Activated naive CD4-positive, alpha-beta T cell treated with anti-CD3 and anti-CD28 coated beads for 36 hours (primary cell): ENCODE measurements at regions of chr7 and their contacts with region 1.

Region 1: DNA sequence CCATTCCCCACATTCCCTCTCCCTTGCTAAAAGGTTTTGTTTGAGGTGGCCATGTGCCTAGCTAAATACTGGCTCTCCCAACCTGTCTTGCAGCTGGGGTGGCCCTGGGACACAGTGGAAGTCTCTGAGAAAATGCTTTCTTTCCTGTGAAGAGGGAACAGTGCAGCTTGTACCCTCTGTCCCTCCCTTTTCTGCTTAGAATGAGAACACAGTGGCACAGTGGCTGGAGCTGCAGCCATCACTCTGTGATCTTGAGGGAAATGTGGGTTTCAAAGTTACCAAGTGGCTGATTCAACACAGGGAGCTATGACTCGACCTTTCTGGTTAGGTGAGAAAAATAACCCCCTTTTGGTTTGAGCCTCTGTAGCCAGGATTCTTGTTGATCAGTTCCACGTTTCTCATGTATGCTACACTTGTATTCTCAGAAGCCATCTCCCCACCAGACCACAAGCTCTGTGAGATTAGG is 62.7 kb upstream of the CARD11 start:
- DNase-seq: peak; percentile 78
- H3K4me3 Mint-ChIP-seq: no peak overlapping the region
- H3K27ac Mint-ChIP-seq: peak overlapping the region; percentile 86
- H3K4me1 Mint-ChIP-seq: peaks cover 68% of the 10 kb centered on the region
- H3K27me3 Mint-ChIP-seq: no peaks in the 10 kb centered on the region

Region 2: DNA sequence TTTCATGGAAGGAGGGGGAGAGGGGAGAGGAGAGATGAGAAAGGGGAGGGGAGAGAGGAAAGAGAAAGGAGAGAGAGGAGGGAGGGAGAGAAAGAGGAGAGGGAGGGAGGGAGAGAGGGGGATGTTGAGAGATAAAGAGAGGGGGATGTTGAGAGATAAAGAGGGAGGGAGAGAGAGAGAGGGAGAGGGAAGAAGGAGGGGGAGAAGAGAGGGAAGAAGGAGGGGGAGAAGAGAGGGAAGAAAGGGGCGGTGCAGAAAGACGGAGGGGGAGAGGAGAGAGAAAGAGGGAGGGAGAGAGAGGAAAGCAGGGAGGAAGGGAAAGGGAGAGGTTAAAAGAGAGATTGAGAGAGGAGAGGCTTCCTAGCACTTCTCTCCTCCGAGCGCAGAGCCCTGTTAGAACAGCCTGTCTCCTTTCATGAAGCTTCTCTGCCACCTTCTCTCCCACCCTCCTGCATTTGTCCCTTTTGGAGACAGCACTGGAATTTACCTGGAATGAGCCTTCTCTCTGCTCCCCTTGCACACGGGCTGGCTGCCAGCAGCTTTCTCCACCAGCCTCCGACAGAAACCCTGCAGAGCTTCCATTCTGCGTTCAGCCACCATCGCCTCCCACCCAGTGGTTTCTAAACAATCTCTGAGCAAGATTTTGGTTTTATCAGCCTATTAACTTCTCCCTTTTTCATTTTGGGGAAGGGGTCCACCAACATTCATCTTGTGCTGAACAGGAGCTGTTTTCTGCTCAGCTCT is 11.3 kb after region 1 on chr7:
- CTCF ChIA-PET with region 1: interaction called, 19 read pairs
- intact Hi-C with region 1: loop called (anchors 1 kb)
- DNase-seq: peak; percentile 73
- H3K4me3 Mint-ChIP-seq: peak overlapping the region; percentile 77
- H3K27ac Mint-ChIP-seq: peak overlapping the region; percentile 81
- H3K4me1 Mint-ChIP-seq: peaks cover 54% of the 10 kb centered on the region
- H3K27me3 Mint-ChIP-seq: no peaks in the 10 kb centered on the region

Region 3: DNA sequence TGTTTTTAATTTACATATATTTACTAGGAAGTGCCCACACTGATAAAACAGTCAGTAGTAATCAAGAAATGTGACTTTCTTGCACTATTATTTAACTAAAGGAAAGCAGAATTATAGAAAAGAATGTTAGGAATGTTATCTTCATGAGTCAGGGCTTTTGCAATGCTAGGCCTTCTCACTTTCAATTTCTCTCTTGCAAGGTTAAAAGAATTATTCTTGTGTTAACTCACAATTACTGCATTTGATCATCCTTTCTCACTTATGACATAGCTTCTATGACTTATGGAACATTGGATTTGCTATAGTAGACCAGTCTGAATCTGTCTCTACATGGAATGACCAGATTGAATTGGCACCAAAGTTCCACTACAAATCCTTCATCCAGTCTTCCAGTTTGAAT is 387.1 kb after region 1 on chr7:
- CTCF ChIA-PET with region 1: no interaction called
- intact Hi-C with region 1: no loop called
- DNase-seq: no peak
- H3K4me3 Mint-ChIP-seq: no peak overlapping the region
- H3K27ac Mint-ChIP-seq: no peak overlapping the region
- H3K4me1 Mint-ChIP-seq: peaks cover 29% of the 10 kb centered on the region
- H3K27me3 Mint-ChIP-seq: no peaks in the 10 kb centered on the region